ENCODE measurements at regions of chr13 and their contacts with region 1.

Region 1: GRCh38 chr13:74287724-74288169 is 153.5 kb upstream of the KLF12 start:
- DNase-seq: peak; percentile 83 to 94 (median 90)
- ATAC-seq: peak; percentile 39 to 63
- H3K4me3 ChIP-seq: peak overlapping the region; percentile 39
- H3K27ac ChIP-seq: no peak overlapping the region
- H3K4me1 ChIP-seq: peaks cover 8% of the 10 kb centered on the region
- H3K27me3 ChIP-seq: no peaks in the 10 kb centered on the region

Region 2: GRCh38 chr13:73835138-73835721 is 452.5 kb before region 1 on chr13:
- intact Hi-C with region 1: loop called in 3 of 4 experiments (anchors 5 to 10 kb)
- DNase-seq: no peak
- ATAC-seq: peak; percentile 16 to 42
- H3K4me3 ChIP-seq: no peak overlapping the region
- H3K27ac ChIP-seq: no peak overlapping the region
- H3K4me1 ChIP-seq: peaks cover 2% of the 10 kb centered on the region
- H3K27me3 ChIP-seq: no peaks in the 10 kb centered on the region

Region 3: DNA sequence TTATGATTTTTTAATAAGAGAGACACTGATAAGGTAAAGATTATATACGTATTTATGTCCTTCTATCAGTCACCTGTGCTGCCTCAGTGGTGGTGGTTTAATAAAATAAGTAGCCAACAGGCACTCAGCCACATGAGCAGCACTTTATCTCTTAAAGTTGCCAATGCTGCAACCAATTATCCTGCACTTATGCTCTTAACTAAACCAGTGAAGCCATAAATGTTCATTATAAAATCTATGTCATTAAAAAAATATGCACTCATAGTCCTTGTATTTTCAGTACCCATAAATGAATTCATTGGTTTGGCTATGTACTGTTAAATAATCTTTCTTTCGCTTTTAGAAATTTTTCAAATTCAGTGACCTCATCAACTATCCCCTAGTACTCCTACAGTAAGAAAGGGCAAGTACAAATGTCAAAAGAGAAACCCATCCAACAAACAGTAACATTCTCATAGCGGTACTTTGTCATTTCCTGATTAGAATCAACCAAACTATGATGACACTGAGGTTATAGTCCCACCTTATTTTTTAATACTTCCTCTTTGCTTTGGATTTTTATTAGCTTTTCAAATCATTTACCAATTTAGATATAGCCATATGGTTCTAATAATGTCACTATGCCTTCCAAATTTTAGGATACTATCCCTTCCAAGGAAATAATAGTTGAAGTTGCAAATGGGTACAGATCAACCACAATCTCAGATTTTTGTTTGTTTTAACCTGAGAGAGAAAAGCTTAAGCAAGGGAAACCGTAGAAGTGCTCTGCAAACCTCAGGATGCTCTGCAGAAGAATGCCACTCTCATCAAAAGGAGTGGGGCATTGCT is 344.4 kb before region 1 on chr13:
- intact Hi-C with region 1: loop called in 1 of 4 experiments (anchors 10 kb)
- DNase-seq: no peak
- ATAC-seq: no peak
- H3K4me3 ChIP-seq: no peak overlapping the region
- H3K27ac ChIP-seq: no peak overlapping the region
- H3K4me1 ChIP-seq: peaks cover 3% of the 10 kb centered on the region
- H3K27me3 ChIP-seq: no peaks in the 10 kb centered on the region

Region 4: GRCh38 chr13:74133657-74134201 is 154.0 kb before region 1 on chr13:
- intact Hi-C with region 1: loop called in 1 of 4 experiments (anchors 10 kb)
- DNase-seq: peak; percentile 89 to 95 (median 95)
- ATAC-seq: peak; percentile 77 to 81
- H3K4me3 ChIP-seq: peak overlapping the region; percentile 95
- H3K27ac ChIP-seq: peak overlapping the region; percentile 88
- H3K4me1 ChIP-seq: peaks cover 3% of the 10 kb centered on the region
- H3K27me3 ChIP-seq: no peaks in the 10 kb centered on the region

Region 5: GRCh38 chr13:74145249-74145975 is 142.3 kb before region 1 on chr13:
- intact Hi-C with region 1: loop called in 1 of 4 experiments (anchors 10 kb)
- DNase-seq: peak in 1 of 3 donors; percentile 12
- ATAC-seq: peak in 1 of 2 donors; percentile 41
- H3K4me3 ChIP-seq: no peak overlapping the region
- H3K27ac ChIP-seq: no peak overlapping the region
- H3K4me1 ChIP-seq: no peaks in the 10 kb centered on the region
- H3K27me3 ChIP-seq: no peaks in the 10 kb centered on the region

Measured in right cardiac atrium (tissue), 5 donors.